Astrocyte of the cerebellum (primary cell): ENCODE measurements at regions of chr2 and their contacts with region 1.

Region 1: GRCh38 chr2:54528311-54528945 is 72.3 kb downstream of the SPTBN1 start:
- DNase-seq: peak; percentile 60
- H3K4me3 ChIP-seq: no peak overlapping the region
- CTCF ChIP-seq: no peak

Region 2: DNA sequence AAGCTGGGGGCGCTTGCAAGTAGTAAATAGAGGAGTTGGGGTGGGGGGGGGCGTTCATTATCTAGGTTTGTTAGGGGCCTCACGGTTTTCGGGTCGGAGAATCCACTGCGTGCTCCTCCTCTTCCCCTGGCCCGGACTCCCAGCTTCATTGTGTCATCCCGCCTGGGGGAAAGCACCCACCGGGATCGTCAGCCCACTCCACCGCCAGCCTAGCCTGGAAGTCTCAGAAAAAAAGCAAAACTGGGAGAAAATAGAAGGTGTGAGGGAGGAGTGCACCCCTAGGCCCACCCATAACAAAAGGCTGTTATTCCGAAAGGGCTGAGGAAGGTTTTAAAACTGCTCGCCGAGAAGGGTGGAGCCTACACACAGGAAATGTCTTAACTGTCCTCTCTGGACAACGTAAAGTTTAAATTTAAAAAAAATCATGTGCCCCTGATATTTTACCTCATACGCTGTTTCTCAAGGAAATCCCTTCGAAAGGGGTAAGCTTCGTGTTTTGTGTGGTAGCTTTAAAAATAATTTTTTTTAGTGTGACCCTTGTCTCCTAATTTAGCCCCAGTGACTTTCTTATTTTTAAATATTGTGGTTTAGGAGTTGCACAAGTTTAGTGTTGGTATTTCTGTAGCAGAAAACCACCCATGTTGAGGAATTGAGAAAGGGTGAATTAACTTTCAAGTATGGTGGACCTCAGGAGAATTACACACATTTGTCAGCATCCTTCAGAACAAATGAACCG is 31.9 kb after region 1 on chr2:
- in situ Hi-C with region 1: loop called (anchors 5 kb)
- DNase-seq: no peak
- H3K4me3 ChIP-seq: peak overlapping the region; percentile 54
- CTCF ChIP-seq: no peak

Region 3: DNA sequence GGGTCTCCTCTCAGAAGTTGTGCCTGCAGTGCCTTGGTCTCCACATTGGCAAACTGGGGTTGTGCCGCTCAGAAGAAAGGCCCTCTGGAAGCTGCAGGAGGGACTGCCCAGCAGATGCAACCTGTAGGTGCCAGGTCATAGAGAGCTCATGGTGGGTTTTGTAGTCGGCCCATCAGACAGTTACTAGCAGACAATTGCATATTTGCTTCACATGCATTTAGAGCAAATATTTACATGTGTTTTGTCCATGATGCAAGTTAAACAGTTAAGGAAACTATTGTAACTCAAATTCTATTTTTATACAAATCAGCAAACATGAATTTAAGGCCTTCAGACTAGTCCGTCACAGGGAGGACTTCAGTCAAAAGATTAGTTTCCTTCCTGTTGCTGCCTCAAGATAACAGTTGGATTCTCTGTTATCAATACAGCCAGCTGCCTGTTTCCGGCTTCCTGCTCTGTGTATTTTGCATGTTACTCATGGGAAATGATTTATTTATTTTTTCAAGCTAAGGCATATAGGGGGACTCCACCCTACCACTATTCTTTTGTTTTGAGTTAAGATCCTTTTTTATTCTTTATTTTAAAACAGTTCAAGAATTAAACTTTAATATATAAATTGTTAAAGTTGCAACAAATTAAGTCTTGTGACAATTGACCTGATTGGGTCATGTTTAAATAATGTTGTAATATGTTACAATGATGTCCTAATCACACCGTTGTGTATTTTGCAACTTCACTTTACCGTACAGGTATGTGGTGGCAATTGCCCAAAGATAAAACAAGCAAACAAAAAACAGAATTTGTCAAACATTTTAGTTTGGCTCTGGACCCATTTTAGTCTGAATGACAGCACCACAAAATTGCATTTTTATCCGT is 61.1 kb after region 1 on chr2:
- in situ Hi-C with region 1: no loop called
- DNase-seq: no peak
- H3K4me3 ChIP-seq: no peak overlapping the region
- CTCF ChIP-seq: no peak